Posterior vena cava (tissue), 2 donors: ENCODE measurements at regions of chr16 and their contacts with region 1.

Region 1: GRCh38 chr16:13770401-13770800 is 149.6 kb upstream of the ERCC4 start:
- DNase-seq: no peak

Region 2: GRCh38 chr16:13697568-13697967 is 72.8 kb before region 1 on chr16:
- intact Hi-C with region 1: loop called in 1 of 2 experiments (anchors 2 kb)
- DNase-seq: no peak

Region 3: GRCh38 chr16:13732816-13733215 is 37.6 kb before region 1 on chr16:
- intact Hi-C with region 1: no loop called
- DNase-seq: no peak

Region 4: DNA sequence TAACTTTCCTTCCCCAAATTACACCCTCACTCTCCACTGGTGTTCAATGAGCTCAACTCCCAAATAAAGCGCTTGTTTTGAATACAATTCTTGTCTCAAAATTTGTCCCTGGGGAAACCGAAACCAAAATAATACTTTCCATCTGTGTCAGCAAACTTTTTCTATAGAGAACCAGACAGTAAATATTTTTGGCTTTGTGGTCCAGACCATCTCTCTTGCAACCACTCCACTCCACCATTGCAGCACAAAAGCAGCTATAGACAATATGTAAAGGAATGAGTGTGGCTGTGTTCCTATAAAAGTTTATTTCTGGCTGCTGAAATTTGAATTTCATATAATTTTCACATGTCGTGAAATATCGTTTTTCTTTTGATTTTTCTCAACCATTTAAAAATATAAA is 65.0 kb after region 1 on chr16:
- intact Hi-C with region 1: no loop called
- DNase-seq: no peak

Region 5: GRCh38 chr16:13848795-13849194 is 78.4 kb after region 1 on chr16:
- intact Hi-C with region 1: no loop called
- DNase-seq: no peak